Activated naive CD4-positive, alpha-beta T cell treated with anti-CD3 and anti-CD28 coated beads for 36 hours (primary cell): ENCODE measurements at regions of chr16 and their contacts with region 1.

Region 1: DNA sequence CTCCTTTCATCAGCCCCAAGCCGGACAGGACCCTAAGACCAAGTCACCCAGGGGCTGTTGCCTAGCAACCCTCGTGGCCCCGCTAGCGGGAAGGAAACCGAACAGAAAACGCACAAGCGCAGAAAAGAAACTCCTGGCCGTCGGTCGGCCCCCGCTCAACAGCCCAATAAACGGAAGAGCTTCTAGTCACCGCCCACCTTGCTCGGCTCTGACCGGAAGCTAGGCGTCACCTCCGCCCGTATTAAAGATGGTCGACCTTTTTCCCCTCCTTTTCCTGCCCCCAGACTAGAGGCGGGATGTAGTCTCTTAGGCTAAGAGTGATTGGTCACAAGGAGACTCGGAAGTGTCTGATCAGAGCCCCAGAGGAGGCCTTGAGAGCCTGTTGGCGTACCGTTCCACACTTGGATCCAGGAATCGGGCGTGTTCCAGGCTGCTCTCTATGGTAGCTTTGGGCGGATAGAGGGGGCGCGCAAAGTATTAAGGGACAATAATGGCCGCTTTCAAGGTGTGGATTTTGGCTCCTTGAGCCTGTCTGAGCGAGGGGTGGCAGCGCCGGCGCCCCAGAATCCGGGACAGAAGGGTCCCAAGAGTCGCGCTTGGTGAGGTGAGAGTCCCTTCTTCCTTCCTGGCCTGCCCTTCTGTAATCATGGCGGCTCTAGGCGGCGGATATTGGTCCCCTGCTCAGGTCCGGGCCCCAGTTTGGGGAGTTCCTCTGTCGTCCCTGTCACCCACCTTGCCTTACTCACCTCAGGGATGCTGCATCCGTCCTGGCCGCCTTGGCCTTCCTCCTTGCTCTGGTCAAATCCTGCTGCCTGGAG is at the starts of genes DHX38 and TXNL4B:
- DNase-seq: peak; percentile 96
- H3K4me3 Mint-ChIP-seq: peak within 1 kb of the TSS; percentile 96
- H3K27ac Mint-ChIP-seq: peak within 1 kb of the TSS; percentile 95
- H3K4me1 Mint-ChIP-seq: peaks cover 35% of the 10 kb centered on the region
- H3K27me3 Mint-ChIP-seq: no peaks in the 10 kb centered on the region
- total RNA-seq, gene DHX38: 78.6 to 79.9 TPM
- total RNA-seq, gene TXNL4B: 22.0 to 24.1 TPM

Region 2: DNA sequence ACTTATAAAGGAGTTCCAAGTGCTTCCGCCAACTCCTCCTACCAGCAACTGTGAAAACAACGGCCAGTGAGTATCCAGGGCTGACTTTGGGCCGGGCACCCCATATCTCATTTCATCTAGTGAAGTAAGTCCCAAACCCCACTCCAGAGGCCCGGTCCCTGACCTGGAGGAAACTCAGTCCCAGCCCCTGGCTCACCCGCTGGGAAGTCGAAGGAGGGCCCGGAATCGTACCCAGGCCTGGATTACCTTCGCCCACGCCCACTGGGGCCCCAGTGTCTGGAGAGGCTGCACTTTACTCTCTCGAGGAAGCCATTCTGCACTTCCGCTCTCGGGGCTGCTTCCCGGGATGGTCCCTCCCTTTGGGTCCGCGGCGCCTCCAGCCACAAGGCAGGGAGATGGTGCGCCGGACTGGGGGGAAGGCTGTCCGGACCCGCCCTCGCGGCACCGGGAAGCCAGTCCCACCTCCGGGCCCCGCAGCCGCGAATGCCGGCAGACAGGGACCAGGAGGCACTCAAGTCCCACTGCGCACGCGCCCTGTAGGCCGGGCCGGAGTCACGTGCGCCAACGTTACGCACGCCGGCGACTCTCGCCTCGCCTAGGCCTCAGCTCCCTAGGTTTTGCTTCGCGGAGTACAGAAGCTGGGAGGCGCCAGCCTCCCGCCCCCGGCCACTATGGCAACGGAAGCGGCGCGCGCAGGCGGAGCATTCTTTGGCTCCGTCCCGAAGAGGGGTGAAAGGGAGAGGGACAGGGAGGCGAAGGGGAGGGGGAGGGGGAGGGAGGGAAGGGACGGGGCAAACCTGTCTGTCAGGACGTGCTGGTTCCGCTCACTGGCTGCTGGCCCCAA is 804.5 kb before region 1 on chr16 and contains the start of gene CMTR2:
- CTCF ChIA-PET with region 1: no interaction called
- intact Hi-C with region 1: loop called (anchors 10 kb)
- DNase-seq: peak; percentile 93
- H3K4me3 Mint-ChIP-seq: peak within 1 kb of the TSS; percentile 84
- H3K27ac Mint-ChIP-seq: peak within 1 kb of the TSS; percentile 86
- H3K4me1 Mint-ChIP-seq: peaks cover 9% of the 10 kb centered on the region
- H3K27me3 Mint-ChIP-seq: peaks cover 7% of the 10 kb centered on the region
- total RNA-seq, gene CMTR2: 14.4 to 15.1 TPM

Region 3: DNA sequence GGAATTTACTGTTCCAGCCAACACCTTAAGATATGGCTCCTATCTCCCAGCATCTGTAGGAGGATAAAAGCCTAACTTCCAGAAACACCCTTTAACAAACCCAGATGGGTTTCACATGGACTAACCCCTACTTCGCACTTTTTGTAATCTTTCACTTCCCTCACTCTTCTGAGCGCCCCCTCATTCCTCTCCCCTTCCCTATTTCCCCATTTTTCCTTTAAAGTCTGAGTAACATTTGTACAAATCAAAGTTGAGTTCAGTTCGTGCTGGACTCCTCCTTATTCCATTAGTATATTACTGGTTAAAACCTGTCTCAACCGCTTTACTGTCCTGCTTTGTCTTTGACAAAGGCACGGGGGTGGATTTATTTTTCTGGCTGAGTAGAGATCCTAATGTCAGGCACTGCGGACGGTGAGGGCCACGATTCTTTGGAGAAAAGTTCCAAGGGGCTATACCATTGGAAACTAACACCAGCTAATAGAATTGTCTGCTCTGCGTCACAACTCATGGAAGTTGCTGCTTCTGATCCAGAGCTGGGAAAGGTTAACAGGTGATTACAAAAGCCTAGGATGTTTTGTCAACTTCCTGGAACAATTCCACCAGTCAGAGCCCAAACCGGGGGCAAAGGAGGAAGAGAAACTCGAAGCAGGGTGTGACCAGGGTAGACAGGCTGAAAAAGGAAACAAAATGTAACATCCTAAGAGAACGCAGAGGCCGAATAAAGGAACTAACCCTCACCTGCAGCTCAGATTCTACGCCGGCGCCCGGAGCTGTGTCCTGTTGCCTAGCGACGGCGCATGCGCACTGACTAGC is 529.3 kb before region 1 on chr16:
- CTCF ChIA-PET with region 1: no interaction called
- intact Hi-C with region 1: loop called (anchors 1 kb)
- DNase-seq: no peak
- H3K4me3 Mint-ChIP-seq: peak overlapping the region; percentile 80
- H3K27ac Mint-ChIP-seq: peak overlapping the region; percentile 88
- H3K4me1 Mint-ChIP-seq: peaks cover 15% of the 10 kb centered on the region
- H3K27me3 Mint-ChIP-seq: no peaks in the 10 kb centered on the region

Region 4: DNA sequence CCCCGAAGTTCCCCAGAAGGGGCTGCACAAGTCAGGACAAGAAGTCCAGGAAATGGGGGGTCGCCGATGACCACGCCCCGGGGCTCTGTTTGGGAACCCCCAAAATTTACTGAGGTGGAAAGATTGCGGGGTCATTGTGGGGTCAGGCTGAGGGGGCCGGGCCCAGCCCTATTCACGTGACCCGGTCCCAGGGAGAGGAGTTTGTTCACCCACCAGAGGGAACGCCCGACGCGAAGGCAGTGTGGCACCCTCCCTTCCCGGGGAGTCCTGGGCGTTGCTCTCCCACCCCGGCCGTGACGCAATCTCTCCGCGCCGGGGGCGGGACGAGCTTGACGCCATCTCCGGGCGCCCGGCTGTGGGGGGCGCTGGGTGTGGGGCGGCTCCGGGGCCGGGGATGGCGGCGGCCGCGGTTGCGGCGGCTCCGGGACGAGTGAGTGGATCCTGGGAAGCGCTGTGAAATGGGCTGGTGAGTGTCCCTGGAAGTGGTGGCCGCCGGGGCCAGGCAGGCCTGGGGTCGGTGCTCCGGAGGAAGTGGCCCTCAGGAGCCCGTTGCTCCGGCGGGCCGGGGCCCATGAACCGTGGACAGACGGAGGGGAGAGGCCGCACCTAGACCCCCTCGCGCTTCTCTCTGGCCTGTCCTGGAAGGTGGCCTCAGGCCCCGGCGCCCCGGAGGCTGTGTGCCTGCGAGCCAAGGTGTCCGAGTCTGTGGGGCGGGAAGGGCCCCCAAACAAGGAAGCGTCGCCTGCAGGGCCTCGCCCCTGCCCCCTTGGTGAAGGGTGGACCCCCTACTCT is 247.8 kb before region 1 on chr16 and contains the start of gene ATXN1L:
- CTCF ChIA-PET with region 1: no interaction called
- intact Hi-C with region 1: loop called (anchors 1 kb)
- DNase-seq: peak; percentile 90
- H3K4me3 Mint-ChIP-seq: peak within 1 kb of the TSS; percentile 88
- H3K27ac Mint-ChIP-seq: peak within 1 kb of the TSS; percentile 93
- H3K4me1 Mint-ChIP-seq: peaks cover 44% of the 10 kb centered on the region
- H3K27me3 Mint-ChIP-seq: no peaks in the 10 kb centered on the region
- total RNA-seq, gene ATXN1L: 11.3 to 11.9 TPM

Region 5: GRCh38 chr16:72008424-72009216 is 85.0 kb before region 1 on chr16 and contains the start of gene DHODH:
- CTCF ChIA-PET with region 1: no interaction called
- intact Hi-C with region 1: loop called (anchors 1 kb)
- DNase-seq: peak; percentile 99
- H3K4me3 Mint-ChIP-seq: peak within 1 kb of the TSS; percentile 94
- H3K27ac Mint-ChIP-seq: peak within 1 kb of the TSS; percentile 76
- H3K4me1 Mint-ChIP-seq: peaks cover 21% of the 10 kb centered on the region
- H3K27me3 Mint-ChIP-seq: no peaks in the 10 kb centered on the region
- total RNA-seq, gene DHODH: 18.3 to 19.9 TPM

Region 6: GRCh38 chr16:72042157-72042660 is 51.4 kb before region 1 on chr16:
- CTCF ChIA-PET with region 1: no interaction called
- intact Hi-C with region 1: no loop called
- DNase-seq: no peak
- H3K4me3 Mint-ChIP-seq: no peak overlapping the region
- H3K27ac Mint-ChIP-seq: no peak overlapping the region
- H3K4me1 Mint-ChIP-seq: no peaks in the 10 kb centered on the region
- H3K27me3 Mint-ChIP-seq: no peaks in the 10 kb centered on the region

Region 7: DNA sequence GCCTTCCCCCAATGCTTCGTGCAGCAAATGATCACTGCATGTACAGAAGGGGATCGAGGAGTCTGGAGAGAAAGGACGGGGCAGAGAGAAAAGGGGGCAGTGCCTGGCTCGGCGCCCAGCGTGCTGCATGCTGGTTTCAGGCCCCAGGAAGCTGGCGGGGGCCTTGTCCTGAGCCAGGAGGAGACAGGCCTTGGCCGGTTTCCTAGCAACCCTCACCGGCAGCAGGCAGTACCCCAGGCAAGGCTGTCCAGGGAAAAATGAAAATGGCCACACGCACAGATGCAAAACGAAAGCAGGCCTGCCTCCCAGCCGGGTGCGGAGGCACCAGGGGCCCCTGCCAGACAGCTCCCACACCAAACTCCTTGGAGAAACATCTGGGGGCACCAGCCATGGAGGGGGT is 828.0 kb after region 1 on chr16:
- CTCF ChIA-PET with region 1: no interaction called
- intact Hi-C with region 1: no loop called
- DNase-seq: no peak
- H3K4me3 Mint-ChIP-seq: peak overlapping the region; percentile 22
- H3K27ac Mint-ChIP-seq: no peak overlapping the region
- H3K4me1 Mint-ChIP-seq: peaks cover 13% of the 10 kb centered on the region
- H3K27me3 Mint-ChIP-seq: peaks cover 3% of the 10 kb centered on the region